Right ventricle myocardium superior (tissue), 1 donor: ENCODE measurements at regions of chr10 and their contacts with region 1.

Region 1: DNA sequence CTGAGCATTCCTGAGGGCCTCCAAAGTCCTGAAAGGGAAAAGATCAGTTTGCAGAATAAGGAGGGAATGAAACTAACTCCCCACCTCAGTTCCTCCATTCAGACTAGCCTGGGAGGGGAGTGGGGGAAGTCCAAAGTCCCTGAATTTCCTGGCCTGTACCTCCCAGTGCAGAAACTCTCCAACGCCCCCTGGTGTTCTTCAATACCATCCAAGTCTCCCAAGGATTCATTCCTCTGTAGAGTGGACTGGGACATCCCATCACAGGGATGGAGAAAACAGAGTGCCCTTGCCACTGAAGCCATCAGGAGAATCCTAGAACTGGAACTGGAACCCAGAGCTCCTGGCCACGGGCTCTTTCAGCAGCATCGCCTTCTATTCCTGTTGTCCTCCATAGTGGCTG is 1.6 kb upstream of the COL13A1 start:
- DNase-seq: no peak
- ATAC-seq: peak; percentile 43

Region 2: DNA sequence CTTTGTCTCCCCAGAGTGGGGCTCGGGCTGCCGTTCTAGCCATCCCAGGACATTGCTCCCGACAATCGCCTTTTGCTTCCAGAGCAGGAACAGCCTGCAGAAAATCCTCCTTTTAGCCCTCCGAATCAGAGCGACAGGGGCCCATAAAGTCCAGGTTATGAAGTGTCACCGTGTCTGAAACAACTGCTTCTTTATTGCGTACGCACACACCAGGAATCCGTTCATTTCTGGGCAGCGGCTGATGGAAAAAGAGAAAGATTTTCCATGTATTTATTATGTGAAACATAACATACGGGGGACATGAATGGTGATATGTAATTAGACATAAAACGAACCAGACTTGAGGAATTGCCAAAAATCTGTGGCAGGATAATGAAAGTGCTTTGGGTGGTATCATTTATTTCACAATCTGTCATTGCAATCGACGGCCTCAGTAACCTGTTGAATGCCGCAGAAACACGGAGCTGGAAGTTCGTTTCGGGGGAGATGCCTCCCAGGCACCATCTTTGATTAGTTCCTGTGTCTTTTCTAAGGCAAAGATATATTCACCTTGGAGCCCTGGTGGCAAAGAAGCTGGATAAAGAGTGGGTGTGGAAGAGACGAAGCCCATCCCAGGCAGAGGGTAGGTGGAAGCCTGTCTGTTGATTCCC is 122.0 kb before region 1 on chr10:
- intact Hi-C with region 1: no loop called
- DNase-seq: no peak
- ATAC-seq: no peak

Region 3: DNA sequence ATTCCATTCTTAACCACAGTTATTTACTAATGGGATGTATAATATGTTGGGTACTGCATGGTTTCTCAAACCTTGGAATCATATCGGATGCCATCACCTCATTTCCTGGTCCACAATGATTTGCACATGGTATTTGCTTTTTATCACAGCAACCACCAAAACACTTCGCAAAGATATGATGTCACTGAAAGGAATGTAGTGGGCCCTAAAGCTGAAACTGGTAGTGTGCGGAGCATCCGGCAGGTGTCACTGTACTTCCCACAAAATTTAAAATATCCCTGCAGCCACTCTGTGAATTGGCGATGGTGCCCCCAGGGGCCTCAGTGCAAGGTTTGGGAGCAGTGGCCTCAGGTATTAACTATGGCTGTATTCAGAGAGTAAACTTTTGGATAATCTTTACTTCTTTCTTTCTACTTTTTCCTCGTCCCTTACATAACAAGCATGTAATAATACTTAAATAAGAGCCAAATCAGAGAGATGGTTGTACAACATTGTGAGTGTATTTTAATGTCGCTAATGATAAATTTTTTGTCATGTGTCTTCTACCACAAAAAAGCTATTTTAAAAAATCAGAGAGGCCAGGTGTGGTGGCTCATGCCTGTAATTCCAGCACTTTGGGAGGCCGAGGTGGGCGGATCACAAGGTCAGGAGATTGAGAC is 103.9 kb before region 1 on chr10:
- intact Hi-C with region 1: loop called (anchors 5 kb)
- DNase-seq: no peak
- ATAC-seq: peak; percentile 71

Region 4: DNA sequence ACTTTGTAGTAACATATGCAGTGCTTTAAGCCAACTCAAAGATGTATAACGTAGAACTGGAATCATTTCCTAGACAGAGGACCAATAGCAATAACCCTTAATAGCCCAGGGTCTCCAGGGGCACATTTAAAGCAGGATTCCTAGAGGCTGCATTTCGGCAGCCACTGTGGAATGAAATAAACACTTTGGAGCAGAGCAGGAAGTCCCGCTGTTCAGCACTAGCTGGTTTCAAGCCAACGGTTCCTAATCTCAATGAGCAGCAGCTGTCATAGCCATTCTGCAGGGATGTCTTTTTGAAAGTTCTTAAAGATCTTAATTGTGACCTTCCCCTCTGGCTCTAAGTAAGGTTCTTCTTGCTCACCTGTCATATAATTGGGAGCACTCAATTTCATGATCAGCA is 234.1 kb after region 1 on chr10:
- intact Hi-C with region 1: no loop called
- DNase-seq: no peak
- ATAC-seq: peak; percentile 65

Region 5: GRCh38 chr10:70940834-70941568 is 1140.9 kb after region 1 on chr10:
- intact Hi-C with region 1: no loop called
- DNase-seq: peak; percentile 78
- ATAC-seq: peak; percentile 60